ENCODE measurements at regions of chr4 and their contacts with region 1.

Region 1: GRCh38 chr4:23290656-23291055 is 597.9 kb downstream of the GBA3 start:
- DNase-seq: no peak
- ATAC-seq: peak; percentile 91 to 95 (median 94)
- H3K4me3 ChIP-seq: peak overlapping the region; percentile 50
- H3K27ac ChIP-seq: peak overlapping the region; percentile 76
- H3K4me1 ChIP-seq: peaks cover 11% of the 10 kb centered on the region
- H3K27me3 ChIP-seq: no peaks in the 10 kb centered on the region
- CTCF ChIP-seq: no peak

Region 2: GRCh38 chr4:23333946-23334878 is 43.6 kb after region 1 on chr4:
- intact Hi-C with region 1: loop called in 1 of 2 experiments (anchors 5 kb)
- DNase-seq: no peak
- ATAC-seq: peak; percentile 87 to 96 (median 89)
- H3K4me3 ChIP-seq: peak overlapping the region; percentile 19
- H3K27ac ChIP-seq: peak overlapping the region; percentile 81
- H3K4me1 ChIP-seq: peaks cover 25% of the 10 kb centered on the region
- H3K27me3 ChIP-seq: no peaks in the 10 kb centered on the region
- CTCF ChIP-seq: peak; percentile 10

Region 3: DNA sequence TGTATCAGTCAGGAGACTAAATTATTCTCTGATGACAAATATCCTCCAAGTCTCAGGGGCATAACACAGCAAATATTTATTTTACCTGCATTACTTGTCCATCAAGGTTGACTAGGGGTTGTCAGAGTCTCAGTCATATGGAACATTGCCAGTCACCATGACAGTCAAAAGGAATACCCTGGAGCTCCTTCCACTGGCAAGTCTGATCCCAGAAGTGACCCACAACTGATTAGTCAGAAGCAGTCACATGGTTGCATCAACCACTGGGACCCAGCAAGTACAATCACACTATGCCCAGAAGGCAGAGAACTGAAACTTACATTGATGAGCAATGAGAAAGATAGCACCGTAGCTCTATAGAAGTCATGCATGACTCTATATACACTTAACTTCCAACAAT is 1462.8 kb after region 1 on chr4:
- intact Hi-C with region 1: no loop called
- DNase-seq: no peak
- ATAC-seq: no peak
- H3K4me3 ChIP-seq: no peak overlapping the region
- H3K27ac ChIP-seq: no peak overlapping the region
- H3K4me1 ChIP-seq: no peaks in the 10 kb centered on the region
- H3K27me3 ChIP-seq: no peaks in the 10 kb centered on the region
- CTCF ChIP-seq: no peak

Measured in psoas muscle (tissue), 8 donors.